Cardiac septum (tissue), 1 donor: ENCODE measurements at regions of chr20 and their contacts with region 1.

Region 1: DNA sequence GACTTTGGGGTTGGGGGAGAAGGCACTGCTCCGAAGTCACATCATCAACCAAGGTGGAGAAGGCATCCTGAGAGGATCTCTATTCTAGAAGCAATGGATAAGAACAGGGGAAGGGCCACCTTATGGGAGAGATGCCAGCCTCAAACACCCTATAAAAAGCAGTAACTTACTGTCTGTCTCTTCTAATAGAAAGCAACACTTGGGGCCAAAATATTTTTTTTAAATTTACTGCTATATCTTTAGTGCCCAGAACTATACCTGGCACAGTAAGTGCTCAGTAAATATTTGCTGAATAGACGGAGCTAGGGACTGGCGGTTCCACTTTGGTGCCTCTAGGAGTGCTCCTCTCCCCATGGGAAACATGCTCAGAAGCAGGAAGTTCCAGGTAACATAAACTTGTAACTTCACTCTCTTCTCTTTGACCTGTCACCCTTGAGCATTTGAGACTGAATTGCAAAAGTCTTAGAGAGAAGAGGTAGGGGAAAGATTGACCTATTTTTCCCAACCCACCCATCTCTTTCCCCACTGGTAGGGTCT is 799 bp upstream of the OTOR start:
- DNase-seq: no peak

Region 2: DNA sequence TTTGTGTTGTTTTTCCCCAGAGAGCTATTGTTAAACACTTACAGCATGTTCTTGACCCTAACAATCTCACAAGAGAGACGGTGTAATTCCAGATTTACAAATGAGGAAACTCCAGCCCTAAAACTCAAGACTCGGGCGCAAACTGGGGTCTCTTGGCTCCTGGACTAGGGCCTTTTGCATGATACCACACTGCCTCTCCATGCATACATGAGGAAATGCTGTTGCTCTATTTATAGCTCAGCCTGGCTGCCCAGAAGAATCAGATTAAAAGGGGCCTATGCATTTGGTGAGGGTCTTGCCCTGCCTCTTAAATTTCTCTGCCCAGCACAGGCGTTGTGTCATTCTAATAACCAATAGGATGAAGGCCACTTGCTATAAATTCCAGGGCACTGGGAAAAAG is 48.1 kb before region 1 on chr20:
- intact Hi-C with region 1: loop called (anchors 5 kb)
- DNase-seq: no peak